ENCODE measurements at regions of chr16 and their contacts with region 1.

Region 1: DNA sequence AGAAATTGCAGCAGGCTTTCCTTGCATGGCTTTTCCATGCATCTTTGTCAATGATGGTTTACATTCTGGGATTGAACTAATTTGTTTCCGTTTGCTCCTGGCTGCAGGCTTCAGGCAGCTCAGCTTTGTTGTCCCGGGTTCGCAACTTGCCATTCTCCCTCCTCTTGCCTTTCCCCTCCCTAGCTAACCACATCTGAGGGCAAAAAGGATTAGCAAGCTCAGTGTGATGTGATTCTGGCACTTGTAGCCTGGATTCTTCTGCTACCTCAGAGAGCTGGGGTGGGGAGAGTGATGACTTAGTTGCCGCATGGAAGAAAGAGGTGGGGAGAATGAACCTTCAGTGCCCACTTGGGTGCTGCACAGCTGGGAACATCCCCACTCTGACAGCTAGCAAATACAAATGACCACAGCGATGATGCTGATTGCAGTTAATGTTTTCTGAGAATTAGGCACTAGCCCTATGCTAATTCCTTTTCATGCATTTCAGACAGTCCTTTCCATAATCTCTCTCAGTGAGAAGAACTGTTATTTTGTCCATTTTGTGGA is 120.2 kb upstream of the SALL1 start:
- DNase-seq: no peak
- H3K4me3 ChIP-seq: no peak overlapping the region
- H3K27ac ChIP-seq: no peak overlapping the region
- H3K4me1 ChIP-seq: no peaks in the 10 kb centered on the region
- H3K27me3 ChIP-seq: no peaks in the 10 kb centered on the region
- CTCF ChIP-seq: no peak
- POLR2A ChIP-seq: no peak

Region 2: GRCh38 chr16:50967827-50968612 is 303.2 kb before region 1 on chr16:
- intact Hi-C with region 1: loop called (anchors 5 kb)
- DNase-seq: no peak
- H3K4me3 ChIP-seq: no peak overlapping the region
- H3K27ac ChIP-seq: no peak overlapping the region
- H3K4me1 ChIP-seq: no peaks in the 10 kb centered on the region
- H3K27me3 ChIP-seq: peaks cover 0 to 4% of the 10 kb centered on the region in 2 donors
- CTCF ChIP-seq: no peak
- POLR2A ChIP-seq: no peak

Region 3: DNA sequence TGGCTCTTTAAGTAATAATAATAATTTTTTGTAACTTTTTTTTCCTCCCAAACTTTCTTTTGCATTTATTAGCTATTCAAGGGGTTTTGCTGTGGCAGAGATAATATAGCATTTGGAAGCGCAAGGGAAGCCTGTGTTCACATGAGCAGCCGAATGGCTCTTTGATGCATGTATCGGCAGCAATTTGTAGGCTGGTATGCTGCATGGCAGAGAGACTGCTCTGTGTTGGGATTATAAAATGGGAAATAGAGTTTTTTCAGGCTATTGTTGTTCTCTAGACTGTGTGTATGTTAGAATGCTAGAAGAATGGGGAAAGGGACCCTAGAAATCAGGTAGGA is 25.6 kb before region 1 on chr16:
- intact Hi-C with region 1: no loop called
- DNase-seq: no peak
- H3K4me3 ChIP-seq: no peak overlapping the region
- H3K27ac ChIP-seq: no peak overlapping the region
- H3K4me1 ChIP-seq: no peaks in the 10 kb centered on the region
- H3K27me3 ChIP-seq: peaks cover 0 to 23% of the 10 kb centered on the region in 2 donors
- CTCF ChIP-seq: no peak
- POLR2A ChIP-seq: no peak

Measured in breast epithelium (tissue), 4 donors.